K562 (cell line): ENCODE measurements at regions of chr5 and their contacts with region 1.

Region 1: DNA sequence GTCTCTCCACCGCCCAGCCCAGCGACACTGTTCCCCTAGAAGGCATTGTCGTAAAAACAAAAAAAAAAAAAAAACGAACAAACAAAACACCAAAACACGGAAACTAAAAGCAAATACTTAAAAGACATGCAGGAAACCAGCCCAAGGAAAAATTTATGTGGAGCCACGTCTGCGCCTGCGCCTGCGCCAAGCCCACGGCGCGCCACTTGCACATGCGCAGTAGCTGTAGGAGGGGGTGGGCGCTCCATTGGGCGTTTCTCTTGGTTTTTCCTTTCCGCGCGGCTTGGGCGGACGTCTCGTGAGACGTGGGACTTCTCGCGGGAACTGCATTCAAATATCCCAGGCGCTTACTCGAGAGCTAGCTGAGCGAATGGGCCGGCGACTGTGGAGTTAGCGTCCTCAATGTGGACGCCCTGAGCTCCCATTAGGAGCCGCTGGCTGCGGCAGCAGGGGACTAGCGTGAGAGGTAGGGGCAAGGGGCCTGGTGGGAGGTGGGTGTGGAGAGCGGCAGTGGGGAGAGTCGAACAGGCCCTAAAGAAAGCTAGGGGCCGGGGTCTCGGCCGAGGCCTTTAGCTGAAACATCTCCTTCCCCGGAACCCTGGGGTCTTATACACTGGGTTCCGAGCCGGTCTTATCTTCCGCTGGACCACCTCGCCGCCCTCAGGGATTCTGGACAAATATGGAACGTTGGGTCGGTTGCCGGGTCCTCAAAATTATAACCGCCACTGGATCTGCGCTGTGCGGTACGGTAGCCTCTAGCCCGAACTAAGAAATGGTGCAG is at the start of gene SPDL1:
- DNase-seq: peak; percentile 94 to 98 (median 97)
- ATAC-seq: peak; percentile 97
- H3K4me3 ChIP-seq: peak within 1 kb of the TSS; percentile 65
- H3K27ac ChIP-seq: peak within 1 kb of the TSS; percentile 81
- H3K4me1 ChIP-seq: peaks cover 2 to 7% of the 10 kb centered on the region in 2 experiments; a peak in 3 of 5 replicates
- H3K27me3 ChIP-seq: no peaks in the 10 kb centered on the region
- CTCF ChIP-seq: peak in 1 of 3 experiments; percentile 25; a peak in 1 of 6 replicates
- EP300 ChIP-seq: no peak
- POLR2A ChIP-seq: peak; percentile 95
- RAD21 ChIP-seq: no peak
- polyA plus RNA-seq, gene SPDL1: 32.4 to 51.4 TPM

Region 2: DNA sequence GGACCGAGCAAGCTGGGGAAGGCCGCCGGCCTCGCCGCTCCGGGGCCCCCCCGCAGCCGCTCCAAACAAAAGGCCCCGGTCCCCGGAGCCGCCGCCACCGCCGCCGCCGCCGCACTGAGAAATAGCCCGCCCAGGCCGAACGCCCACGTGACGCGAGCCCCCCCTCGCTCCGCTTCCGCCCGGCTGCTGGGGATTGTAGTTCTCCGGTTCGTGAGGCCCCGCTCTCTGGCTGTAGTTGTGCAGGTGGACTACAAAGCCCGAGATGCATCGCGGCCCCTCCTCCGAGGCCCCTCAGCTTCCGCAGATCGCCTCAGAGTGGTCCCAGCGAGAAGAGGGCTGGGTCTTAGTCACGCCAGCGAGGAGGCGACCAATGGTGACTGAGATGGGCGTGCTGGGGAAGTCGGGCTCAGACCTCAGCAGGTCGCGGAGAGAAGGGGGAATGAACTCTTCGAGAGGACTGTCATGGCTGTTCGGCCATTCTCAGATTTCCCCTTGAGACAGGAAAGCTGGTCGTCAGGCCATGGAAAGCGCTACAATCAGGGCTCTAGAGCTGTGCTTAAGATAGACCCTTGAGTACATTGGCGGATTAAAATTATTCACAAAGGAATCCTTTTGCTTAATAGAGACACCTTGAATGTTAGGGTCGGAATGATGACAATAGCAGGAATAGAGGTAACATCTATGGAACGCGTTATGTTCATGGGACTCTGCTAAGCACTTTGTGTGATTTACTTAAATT is 1004.0 kb before region 1 on chr5:
- CTCF ChIA-PET with region 1: no interaction called
- POLR2A ChIA-PET with region 1: no interaction called
- in situ Hi-C with region 1: no loop called
- intact Hi-C with region 1: loop called (anchors 5 kb)
- DNase-seq: peak; percentile 93 to 98 (median 95)
- ATAC-seq: peak; percentile 93
- H3K4me3 ChIP-seq: peak overlapping the region; percentile 95
- H3K27ac ChIP-seq: peak overlapping the region; percentile 95
- H3K4me1 ChIP-seq: peaks cover 23 to 26% of the 10 kb centered on the region in 2 experiments; a peak in 4 of 5 replicates
- H3K27me3 ChIP-seq: no peaks in the 10 kb centered on the region
- CTCF ChIP-seq: no peak
- EP300 ChIP-seq: peak; percentile 52; the same call in 1 of the 2 replicates
- POLR2A ChIP-seq: peak; percentile 93
- RAD21 ChIP-seq: 0 out of 4 replicates have a peak, but pooled peaks of 1 of the 2 experiments have one; percentile 7

Region 3: GRCh38 chr5:169265888-169266287 is 317.7 kb before region 1 on chr5:
- CTCF ChIA-PET with region 1: no interaction called
- POLR2A ChIA-PET with region 1: no interaction called
- in situ Hi-C with region 1: no loop called
- intact Hi-C with region 1: loop called (anchors 5 kb)
- DNase-seq: peak; percentile 9 to 38 (median 25)
- ATAC-seq: no peak
- H3K4me3 ChIP-seq: no peak overlapping the region
- H3K27ac ChIP-seq: no peak overlapping the region
- H3K4me1 ChIP-seq: no peaks in the 10 kb centered on the region
- H3K27me3 ChIP-seq: no peaks in the 10 kb centered on the region
- CTCF ChIP-seq: peak in 2 of 3 experiments; percentile 25 to 45; a peak in 3 of 6 replicates
- EP300 ChIP-seq: no peak
- POLR2A ChIP-seq: no peak
- RAD21 ChIP-seq: 0 out of 4 replicates have a peak, but pooled peaks of 1 of the 2 experiments have one; percentile 6

Region 4: DNA sequence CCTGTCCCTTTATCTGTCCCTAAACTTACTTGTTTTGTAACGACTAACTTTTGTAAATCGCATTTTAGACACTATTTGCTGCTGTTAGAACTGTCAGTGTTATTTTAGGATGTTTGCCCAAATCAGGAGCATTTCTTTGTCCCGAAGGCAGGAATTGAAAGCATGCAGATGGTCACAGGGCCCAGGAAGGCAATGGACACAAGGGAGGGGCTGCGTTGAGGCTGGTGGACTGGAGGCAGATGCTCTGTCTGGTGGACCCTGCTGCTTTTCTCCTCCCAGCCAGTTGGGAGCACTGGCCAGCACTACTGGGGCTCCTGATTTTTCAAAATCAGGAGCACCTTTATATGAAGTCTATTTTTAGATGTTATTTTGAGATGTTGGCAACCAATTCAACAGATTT is 85.1 kb after region 1 on chr5:
- CTCF ChIA-PET with region 1: no interaction called
- POLR2A ChIA-PET with region 1: no interaction called
- in situ Hi-C with region 1: no loop called
- intact Hi-C with region 1: loop called (anchors 5 kb)
- DNase-seq: no peak
- ATAC-seq: peak; percentile 69
- H3K4me3 ChIP-seq: no peak overlapping the region
- H3K27ac ChIP-seq: peak overlapping the region; percentile 31; the same call in 1 of the 3 replicates
- H3K4me1 ChIP-seq: peaks cover 0 to 20% of the 10 kb centered on the region in 2 experiments; a peak in 3 of 5 replicates
- H3K27me3 ChIP-seq: no peaks in the 10 kb centered on the region
- CTCF ChIP-seq: no peak
- EP300 ChIP-seq: no peak
- POLR2A ChIP-seq: no peak
- RAD21 ChIP-seq: no peak